ENCODE measurements at regions of chr14 and their contacts with region 1.

Region 1: DNA sequence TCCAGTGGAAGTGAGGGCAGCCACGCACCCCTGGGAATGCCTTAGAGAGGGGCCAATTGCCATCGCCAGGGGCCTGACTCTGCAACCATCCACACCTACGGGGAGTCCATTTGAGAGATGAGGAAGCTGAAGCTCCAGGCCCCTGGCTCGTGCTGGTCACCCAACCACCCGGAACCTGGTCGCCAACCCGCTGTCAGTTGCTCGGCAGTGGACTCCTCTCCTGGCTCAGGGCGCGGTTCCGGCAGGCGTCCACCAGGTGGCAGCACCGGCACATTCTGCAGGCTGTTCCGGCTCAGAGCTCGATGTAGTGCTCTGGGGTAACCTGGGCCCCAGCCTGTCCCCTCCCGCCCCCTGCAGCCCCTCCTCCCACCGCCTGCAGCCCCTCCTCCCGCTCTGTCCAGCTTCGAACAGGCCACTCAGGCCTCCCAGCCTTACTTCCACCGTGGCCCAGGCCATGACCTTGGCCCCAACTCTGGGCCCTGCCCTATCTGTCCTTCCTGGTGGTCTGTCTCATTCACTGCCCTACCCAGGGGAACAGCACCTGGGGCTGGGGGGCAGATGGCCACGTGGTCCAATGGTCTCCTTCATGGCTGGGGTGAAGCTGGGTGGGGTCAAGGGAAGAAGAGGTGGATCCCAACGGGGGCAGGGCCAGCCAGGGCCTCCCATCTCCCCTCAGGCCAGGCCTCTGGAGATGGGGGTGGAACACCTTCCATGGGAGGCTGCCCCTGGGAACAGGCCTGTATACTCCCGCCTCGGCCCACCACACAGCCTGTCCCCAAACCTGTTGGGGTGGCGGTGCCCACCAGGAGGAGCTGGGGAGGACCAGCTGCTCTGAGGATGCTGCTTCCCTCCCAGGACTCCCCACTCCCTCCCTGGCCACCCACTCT is 15.7 kb downstream of the SIVA1 start:
- DNase-seq: peak; percentile 81
- H3K4me3 ChIP-seq: no peak overlapping the region
- H3K27ac ChIP-seq: no peak overlapping the region
- H3K4me1 ChIP-seq: peaks cover 4% of the 10 kb centered on the region
- CTCF ChIP-seq: peak; percentile 78

Region 2: GRCh38 chr14:104712881-104713734 is 55.6 kb before region 1 on chr14:
- CTCF ChIA-PET with region 1: no interaction called
- POLR2A ChIA-PET with region 1: no interaction called
- intact Hi-C with region 1: no loop called
- DNase-seq: no peak
- H3K4me3 ChIP-seq: no peak overlapping the region
- H3K27ac ChIP-seq: no peak overlapping the region
- H3K4me1 ChIP-seq: peaks cover 5% of the 10 kb centered on the region
- CTCF ChIP-seq: no peak

Region 3: GRCh38 chr14:104870420-104871144 is 101.9 kb after region 1 on chr14:
- CTCF ChIA-PET with region 1: no interaction called
- POLR2A ChIA-PET with region 1: no interaction called
- intact Hi-C with region 1: loop called (anchors 2 kb)
- DNase-seq: peak; percentile 27
- H3K4me3 ChIP-seq: no peak overlapping the region
- H3K27ac ChIP-seq: no peak overlapping the region
- H3K4me1 ChIP-seq: no peaks in the 10 kb centered on the region
- CTCF ChIP-seq: peak; percentile 66

Measured in OCI-LY7 (cell line).